ENCODE measurements at regions of chr2 and their contacts with region 1.

Region 1: GRCh38 chr2:168346725-168347477 is 99.5 kb upstream of the STK39 start:
- DNase-seq: peak; percentile 66
- CTCF ChIP-seq: peak; percentile 71

Region 2: GRCh38 chr2:168060986-168061750 is 285.7 kb before region 1 on chr2:
- in situ Hi-C with region 1: no loop called
- DNase-seq: no peak
- CTCF ChIP-seq: no peak

Region 3: DNA sequence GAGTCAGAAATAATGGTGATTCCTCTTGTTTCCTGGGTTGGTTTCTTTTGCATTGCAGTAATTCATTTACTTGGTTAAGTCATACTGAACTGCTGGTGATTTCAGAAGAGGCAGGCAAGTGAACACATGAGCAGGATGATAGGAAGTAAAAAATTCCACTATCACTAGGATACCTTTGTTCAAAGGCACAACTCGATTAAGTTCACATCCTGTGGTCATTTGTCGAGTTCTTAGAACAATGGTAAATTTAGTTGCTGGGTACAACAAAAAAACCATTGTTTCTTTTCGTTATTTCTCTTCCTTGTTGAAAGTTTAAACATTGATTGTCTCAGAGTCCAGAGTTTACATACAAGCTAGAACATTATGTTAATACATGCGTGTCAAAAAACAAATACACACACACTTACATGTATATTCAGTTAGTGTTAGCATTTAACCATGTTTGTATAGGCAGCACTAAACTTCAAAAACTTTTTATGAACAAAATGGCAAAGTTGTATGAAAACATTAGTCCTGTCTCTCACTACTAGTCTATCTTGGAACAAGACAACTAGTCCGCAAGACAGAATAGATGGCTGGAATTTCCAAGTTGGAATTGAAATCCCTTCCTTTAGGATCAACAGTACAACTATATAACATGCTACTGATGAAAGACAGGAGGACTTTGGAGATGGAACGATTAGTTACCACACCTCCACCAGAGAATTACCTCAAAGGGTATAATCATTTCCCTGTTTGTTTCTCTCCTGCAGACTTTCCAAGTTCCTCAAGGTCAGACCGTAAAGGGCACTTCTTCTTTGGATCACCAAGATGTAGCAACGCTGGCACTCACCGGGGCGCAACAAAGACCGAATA is 125.7 kb before region 1 on chr2:
- in situ Hi-C with region 1: no loop called
- DNase-seq: no peak
- CTCF ChIP-seq: no peak

Region 4: GRCh38 chr2:168705534-168706470 is 358.9 kb after region 1 on chr2:
- in situ Hi-C with region 1: loop called (anchors 10 kb)
- DNase-seq: no peak
- CTCF ChIP-seq: peak; percentile 29

Region 5: GRCh38 chr2:168766600-168766999 is 419.7 kb after region 1 on chr2:
- in situ Hi-C with region 1: loop called (anchors 5 kb)
- DNase-seq: no peak
- CTCF ChIP-seq: no peak

Region 6: DNA sequence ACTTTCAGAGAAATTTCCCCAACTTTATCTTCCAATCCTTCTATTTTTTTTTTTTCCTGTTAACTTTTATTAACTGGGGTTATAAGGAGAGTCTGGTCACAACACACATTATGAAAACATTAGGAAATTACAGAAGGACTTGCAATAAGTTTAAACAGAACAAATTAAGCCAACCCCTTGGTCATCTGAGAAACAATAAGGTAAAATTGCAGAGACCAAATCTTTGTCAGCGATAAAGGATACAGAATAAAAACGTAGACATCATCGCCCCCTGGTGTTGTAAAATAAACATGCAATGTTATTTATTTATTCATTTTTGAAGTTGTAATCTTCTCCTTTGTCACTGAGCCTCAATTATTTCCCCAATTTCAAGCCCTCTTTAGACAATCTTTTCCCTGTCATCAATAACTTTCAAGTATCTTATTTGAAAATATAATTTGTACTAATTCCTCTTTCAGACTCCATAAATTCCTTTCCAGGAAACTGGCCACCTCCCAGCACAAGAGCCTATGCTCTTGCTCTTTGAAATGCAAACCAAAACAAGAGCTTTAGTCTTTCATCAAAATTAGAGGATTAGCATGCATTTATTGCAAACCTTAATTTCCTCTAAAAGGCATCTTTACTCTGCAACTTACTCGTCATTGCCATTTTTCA is 573.7 kb after region 1 on chr2:
- in situ Hi-C with region 1: loop called (anchors 25 kb)
- DNase-seq: peak; percentile 39
- CTCF ChIP-seq: peak; percentile 59

Measured in GM13977 (cell line).